ENCODE measurements at regions of chr1 and their contacts with region 1.

Region 1: DNA sequence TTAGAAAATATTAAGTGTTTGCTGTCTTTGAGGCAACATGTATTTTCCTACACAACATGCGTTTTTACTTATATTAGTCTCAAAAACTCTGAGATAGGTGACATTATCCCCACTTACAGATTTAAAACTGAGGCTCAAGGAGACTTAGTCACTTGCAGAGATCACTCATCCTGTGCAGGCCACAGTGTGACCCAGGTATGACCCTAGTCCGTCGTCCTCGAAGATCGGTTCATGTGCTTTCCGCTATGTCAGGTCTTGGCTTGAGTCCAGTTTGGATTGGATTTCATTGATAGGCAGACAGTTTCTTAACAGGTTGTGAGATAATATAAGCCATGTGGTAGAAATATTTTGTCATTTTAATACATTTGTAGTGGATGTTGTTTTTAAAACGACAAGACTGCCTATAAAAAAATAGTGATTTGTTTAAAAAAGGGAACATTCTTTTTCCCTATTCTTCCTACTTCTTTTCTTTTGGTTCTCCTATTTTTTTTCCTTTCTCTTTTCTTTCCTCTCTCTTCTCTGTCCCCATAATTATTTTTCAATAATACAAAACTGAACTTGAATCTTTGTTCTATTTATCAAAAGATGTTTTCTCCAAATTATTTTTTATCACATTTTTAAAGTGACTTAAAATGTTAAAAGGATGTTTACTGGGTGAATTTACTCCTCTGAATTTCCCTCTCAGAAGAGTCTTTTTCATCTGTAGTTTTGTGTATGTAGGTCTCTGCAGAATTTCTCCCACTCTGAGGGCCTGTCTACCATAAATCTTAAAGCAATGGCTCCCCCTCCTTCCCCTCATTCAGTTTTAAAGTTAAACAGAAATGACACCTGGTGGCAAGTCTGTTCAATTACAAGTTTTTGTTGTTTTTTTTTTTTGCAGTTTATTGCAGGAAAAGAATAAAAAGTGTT is 81.8 kb downstream of the PHTF1 start:
- DNase-seq: peak; percentile 19 to 66
- ATAC-seq: peak; percentile 72 to 95
- H3K4me3 ChIP-seq: no peak overlapping the region
- H3K27ac ChIP-seq: no peak overlapping the region
- H3K4me1 ChIP-seq: peaks cover 7 to 8% of the 10 kb centered on the region in 2 donors
- H3K27me3 ChIP-seq: no peaks in the 10 kb centered on the region
- CTCF ChIP-seq: peak in 4 of 5 experiments; percentile 30 to 60 (median 52)
- POLR2A ChIP-seq: no peak

Region 2: DNA sequence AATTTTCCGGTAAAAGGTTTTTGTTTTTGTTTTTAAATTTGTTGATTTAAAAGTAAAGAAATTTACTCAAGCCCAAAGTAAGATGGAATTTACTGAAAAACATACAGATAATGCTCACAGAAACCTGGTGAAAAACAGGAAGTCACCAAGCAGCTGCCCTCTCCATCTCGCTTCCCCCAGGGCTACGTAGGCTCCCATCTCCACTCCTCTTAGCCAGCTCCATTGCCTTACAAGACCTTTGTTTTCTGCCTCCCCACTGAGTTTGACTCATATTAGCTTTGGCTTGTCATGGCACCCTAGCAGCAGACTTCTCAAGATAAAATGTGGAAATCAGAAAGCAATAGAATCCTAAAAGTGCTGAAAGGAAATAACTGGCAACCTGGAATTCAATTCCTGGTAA is 23.9 kb after region 1 on chr1:
- in situ Hi-C with region 1: no loop called
- intact Hi-C with region 1: loop called (anchors 1 kb)
- DNase-seq: no peak
- ATAC-seq: no peak
- H3K4me3 ChIP-seq: no peak overlapping the region
- H3K27ac ChIP-seq: no peak overlapping the region
- H3K4me1 ChIP-seq: no peaks in the 10 kb centered on the region
- H3K27me3 ChIP-seq: no peaks in the 10 kb centered on the region
- CTCF ChIP-seq: no peak
- POLR2A ChIP-seq: no peak

Measured in gastrocnemius medialis (tissue), 4 donors.